ENCODE measurements at regions of chr12 and their contacts with region 1.

Region 1: GRCh38 chr12:81610955-81611889 is 147.9 kb downstream of the PPFIA2 start:
- DNase-seq: peak in 2 of 3 donors; percentile 2 to 7
- H3K4me3 ChIP-seq: no peak overlapping the region
- H3K27ac ChIP-seq: no peak overlapping the region
- H3K4me1 ChIP-seq: no peaks in the 10 kb centered on the region
- H3K27me3 ChIP-seq: peaks cover 0 to 3% (median 0%) of the 10 kb centered on the region in 5 experiments

Region 2: GRCh38 chr12:81520064-81520945 is 90.9 kb before region 1 on chr12:
- CTCF ChIA-PET with region 1: no interaction called
- POLR2A ChIA-PET with region 1: no interaction called
- DNase-seq: peak in 2 of 3 donors; percentile 3 to 12
- H3K4me3 ChIP-seq: peak overlapping the region in 2 of 7 experiments; percentile 3 to 54
- H3K27ac ChIP-seq: no peak overlapping the region
- H3K4me1 ChIP-seq: peaks cover 0 to 7% (median under 1%) of the 10 kb centered on the region in 4 experiments
- H3K27me3 ChIP-seq: no peaks in the 10 kb centered on the region

Region 3: GRCh38 chr12:81627336-81628189 is 16.3 kb after region 1 on chr12:
- CTCF ChIA-PET with region 1: interaction called, 10 read pairs
- POLR2A ChIA-PET with region 1: no interaction called
- DNase-seq: peak; percentile 17 to 33 (median 28)
- H3K4me3 ChIP-seq: no peak overlapping the region
- H3K27ac ChIP-seq: no peak overlapping the region
- H3K4me1 ChIP-seq: no peaks in the 10 kb centered on the region
- H3K27me3 ChIP-seq: no peaks in the 10 kb centered on the region